ENCODE measurements at regions of chr9 and their contacts with region 1.

Region 1: GRCh38 chr9:130461218-130461630 is 16.5 kb downstream of the ASS1 start:
- DNase-seq: peak; percentile 86
- ATAC-seq: peak; percentile 84
- H3K4me3 Mint-ChIP-seq: no peak overlapping the region
- H3K27ac Mint-ChIP-seq: no peak overlapping the region
- H3K4me1 Mint-ChIP-seq: no peaks in the 10 kb centered on the region
- H3K27me3 Mint-ChIP-seq: no peaks in the 10 kb centered on the region
- CTCF ChIP-seq: peak; percentile 98

Region 2: DNA sequence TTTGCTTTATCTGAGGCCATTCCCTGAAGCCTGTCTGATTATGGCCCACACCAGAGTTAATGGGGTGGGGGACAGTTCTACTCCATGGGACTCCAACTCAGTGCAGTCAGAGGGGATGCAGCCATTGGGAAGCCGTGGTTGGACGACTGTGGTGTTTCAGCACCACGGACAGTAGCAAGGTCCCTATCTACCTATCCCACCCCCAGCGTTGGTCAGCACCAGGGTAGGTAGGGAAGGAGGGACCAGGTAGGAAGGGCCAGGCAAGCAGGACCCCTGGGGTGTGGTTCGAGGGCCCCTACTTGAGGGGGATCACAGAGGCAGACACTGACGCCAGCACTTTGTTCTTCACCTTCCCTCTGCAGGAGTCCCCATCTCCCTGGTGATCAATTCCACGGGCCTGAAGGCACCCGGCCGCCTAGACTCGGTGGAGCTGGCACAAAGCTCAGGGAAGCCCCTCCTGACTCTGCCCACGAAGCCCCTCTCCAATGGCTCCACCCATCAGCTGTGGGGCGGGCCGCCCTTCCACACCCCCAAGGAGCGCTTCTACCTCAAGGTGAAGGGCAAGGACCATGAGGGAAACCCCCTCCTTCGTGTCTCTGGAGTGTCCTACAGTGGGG is 162.5 kb before region 1 on chr9:
- CTCF ChIA-PET with region 1: no interaction called
- POLR2A ChIA-PET with region 1: no interaction called
- DNase-seq: peak; percentile 69
- ATAC-seq: peak; percentile 87
- H3K4me3 Mint-ChIP-seq: no peak overlapping the region
- H3K27ac Mint-ChIP-seq: no peak overlapping the region
- H3K4me1 Mint-ChIP-seq: 0 out of 2 replicates have a peak, but pooled peaks cover 2% of the 10 kb centered on the region
- H3K27me3 Mint-ChIP-seq: no peaks in the 10 kb centered on the region
- CTCF ChIP-seq: no peak

Region 3: DNA sequence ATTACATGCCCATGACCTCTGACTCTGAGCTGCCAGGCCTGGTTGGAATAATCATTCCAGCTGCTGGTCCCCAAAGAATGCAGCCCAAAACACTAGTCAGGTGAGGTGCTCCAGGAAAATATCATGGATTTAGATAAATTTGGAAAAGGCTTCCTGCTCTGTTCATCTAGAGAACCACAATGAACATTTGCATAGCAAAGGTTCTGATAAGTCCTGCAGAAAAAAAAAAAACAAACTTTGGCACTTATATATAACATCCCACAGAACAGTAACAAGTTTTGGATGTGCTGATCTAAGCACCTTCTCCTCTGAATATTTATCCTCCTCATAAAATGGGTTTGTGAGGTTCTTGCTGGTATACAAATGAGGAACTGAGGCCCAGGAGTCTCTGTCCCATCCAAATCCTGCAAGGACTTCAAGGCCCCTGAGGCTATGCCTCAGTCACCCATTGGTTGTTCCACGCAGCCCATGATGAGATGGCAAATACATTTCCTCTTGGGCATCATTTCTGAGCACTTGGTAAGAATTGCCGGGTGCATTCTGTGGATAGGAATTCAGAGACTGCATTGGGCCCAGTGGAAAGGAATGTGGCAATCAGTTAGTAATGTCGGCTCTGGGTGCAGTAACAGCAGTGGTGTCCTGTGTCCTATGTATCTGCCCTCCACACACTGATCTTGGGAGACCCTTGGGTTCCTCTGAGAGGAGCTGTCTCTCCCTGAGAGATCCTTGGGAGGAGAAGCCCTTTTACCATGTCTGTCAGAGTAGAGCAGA is 89.8 kb before region 1 on chr9:
- CTCF ChIA-PET with region 1: no interaction called
- POLR2A ChIA-PET with region 1: no interaction called
- DNase-seq: no peak
- ATAC-seq: no peak
- H3K4me3 Mint-ChIP-seq: no peak overlapping the region
- H3K27ac Mint-ChIP-seq: no peak overlapping the region
- H3K4me1 Mint-ChIP-seq: peaks cover 11% of the 10 kb centered on the region
- H3K27me3 Mint-ChIP-seq: no peaks in the 10 kb centered on the region
- CTCF ChIP-seq: no peak

Region 4: GRCh38 chr9:130473566-130473965 is 12.3 kb after region 1 on chr9:
- CTCF ChIA-PET with region 1: interaction called, 11 read pairs
- POLR2A ChIA-PET with region 1: no interaction called
- DNase-seq: no peak
- ATAC-seq: no peak; the same call in 1 of the 2 replicates
- H3K4me3 Mint-ChIP-seq: no peak overlapping the region
- H3K27ac Mint-ChIP-seq: no peak overlapping the region
- H3K4me1 Mint-ChIP-seq: peaks cover 14% of the 10 kb centered on the region
- H3K27me3 Mint-ChIP-seq: no peaks in the 10 kb centered on the region
- CTCF ChIP-seq: no peak

Region 5: GRCh38 chr9:130663258-130663976 is 202.2 kb after region 1 on chr9:
- CTCF ChIA-PET with region 1: interaction called, 14 read pairs
- POLR2A ChIA-PET with region 1: no interaction called
- DNase-seq: peak; percentile 62
- ATAC-seq: peak; percentile 13; the same call in 1 of the 2 replicates
- H3K4me3 Mint-ChIP-seq: peak overlapping the region; percentile 70
- H3K27ac Mint-ChIP-seq: no peak overlapping the region
- H3K4me1 Mint-ChIP-seq: peaks cover 27% of the 10 kb centered on the region
- H3K27me3 Mint-ChIP-seq: peaks cover 100% of the 10 kb centered on the region
- CTCF ChIP-seq: no peak

Region 6: GRCh38 chr9:130682490-130683121 is 221.4 kb after region 1 on chr9:
- CTCF ChIA-PET with region 1: interaction called, 60 read pairs
- POLR2A ChIA-PET with region 1: interaction called, 4 read pairs
- DNase-seq: peak; percentile 79
- ATAC-seq: peak; percentile 59
- H3K4me3 Mint-ChIP-seq: peak overlapping the region; percentile 79
- H3K27ac Mint-ChIP-seq: no peak overlapping the region
- H3K4me1 Mint-ChIP-seq: peaks cover 2% of the 10 kb centered on the region; the same call in 1 of the 2 replicates
- H3K27me3 Mint-ChIP-seq: peaks cover 48% of the 10 kb centered on the region
- CTCF ChIP-seq: peak; percentile 69

Measured in WTC11 (cell line).